B cell (primary cell): ENCODE measurements at regions of chr4 and their contacts with region 1.

Region 1: GRCh38 chr4:2008875-2009703 is at the start of gene NELFA:
- DNase-seq: peak; percentile 99
- ATAC-seq: peak; percentile 82
- H3K4me3 ChIP-seq: peak within 1 kb of the TSS; percentile 61 to 93 (median 85)
- H3K4me3 Mint-ChIP-seq: peak within 1 kb of the TSS; percentile 95
- H3K27ac ChIP-seq: peak within 1 kb of the TSS; percentile 97 to 99
- H3K27ac Mint-ChIP-seq: peak within 1 kb of the TSS; percentile 92
- H3K4me1 ChIP-seq: peaks cover 10 to 21% of the 10 kb centered on the region in 2 donors
- H3K4me1 Mint-ChIP-seq: peaks cover 32% of the 10 kb centered on the region
- H3K27me3 ChIP-seq: no peaks in the 10 kb centered on the region
- H3K27me3 Mint-ChIP-seq: peaks cover 1% of the 10 kb centered on the region
- CTCF ChIP-seq: no peak
- total RNA-seq, gene NELFA: 60.7 and 63.5 TPM in 2 replicates

Region 2: DNA sequence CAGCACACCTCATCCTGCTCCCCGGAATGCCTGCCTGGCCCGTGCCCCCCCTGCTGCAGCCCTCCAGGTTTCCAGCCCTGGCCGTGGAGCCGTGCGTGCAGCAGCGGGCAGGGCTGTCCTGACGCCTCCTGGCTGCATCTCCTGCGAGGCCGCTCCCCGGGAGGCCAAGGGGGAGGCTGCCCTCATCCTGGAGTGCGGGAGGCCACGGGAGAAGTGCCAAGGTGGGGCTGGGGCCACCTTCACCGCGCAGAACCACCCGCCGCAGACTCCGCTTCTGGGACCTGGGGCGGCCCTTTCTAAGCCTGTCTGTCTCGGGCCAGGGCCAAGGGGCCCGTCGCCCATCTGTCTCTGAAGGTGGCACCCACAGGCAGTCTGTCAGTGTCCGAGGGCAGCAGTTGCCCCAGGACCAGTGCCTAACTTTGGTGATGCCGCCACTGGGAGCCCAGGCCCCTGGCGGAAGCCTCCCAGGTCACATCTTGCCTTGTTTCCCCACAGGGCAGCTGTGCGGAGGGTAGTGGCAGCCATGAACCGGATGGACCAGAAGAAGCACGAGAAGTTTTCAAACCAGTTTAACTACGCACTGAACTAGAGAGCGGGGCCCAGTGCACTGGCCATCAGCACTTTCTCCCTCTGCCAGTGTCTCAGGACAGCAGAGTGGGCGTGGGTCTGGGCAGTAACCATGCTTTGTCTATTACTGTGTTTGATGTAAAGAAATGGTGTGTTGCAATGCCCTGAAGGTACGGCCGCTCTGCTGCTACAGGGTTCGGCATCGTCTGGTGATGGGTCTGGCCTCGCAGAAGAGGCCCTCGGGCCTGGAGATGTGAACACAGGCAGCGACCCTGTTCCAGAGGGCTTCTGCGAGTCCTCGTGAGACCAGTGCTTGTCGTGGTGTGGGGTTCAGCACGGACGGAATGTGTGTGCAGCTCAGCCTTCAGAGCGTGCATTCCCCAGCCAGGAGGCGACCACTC is 623.4 kb before region 1 on chr4:
- CTCF ChIA-PET with region 1: no interaction called
- POLR2A ChIA-PET with region 1: no interaction called
- intact Hi-C with region 1: no loop called
- DNase-seq: no peak
- ATAC-seq: no peak
- H3K4me3 ChIP-seq: no peak overlapping the region
- H3K4me3 Mint-ChIP-seq: no peak overlapping the region
- H3K27ac ChIP-seq: no peak overlapping the region
- H3K27ac Mint-ChIP-seq: no peak overlapping the region
- H3K4me1 ChIP-seq: no peaks in the 10 kb centered on the region
- H3K4me1 Mint-ChIP-seq: no peaks in the 10 kb centered on the region
- H3K27me3 ChIP-seq: no peaks in the 10 kb centered on the region
- H3K27me3 Mint-ChIP-seq: no peaks in the 10 kb centered on the region
- CTCF ChIP-seq: no peak

Region 3: GRCh38 chr4:1721004-1721665 is 288.0 kb before region 1 on chr4 and contains the starts of genes TACC3 and TMEM129:
- CTCF ChIA-PET with region 1: no interaction called
- POLR2A ChIA-PET with region 1: no interaction called
- intact Hi-C with region 1: loop called (anchors 2 kb)
- DNase-seq: peak; percentile 98
- ATAC-seq: peak; percentile 81
- H3K4me3 ChIP-seq: peak within 1 kb of the TSS; percentile 41 to 69 (median 60)
- H3K4me3 Mint-ChIP-seq: peak within 1 kb of the TSS; percentile 93
- H3K27ac ChIP-seq: peak within 1 kb of the TSS; percentile 89 to 96
- H3K27ac Mint-ChIP-seq: peak within 1 kb of the TSS; percentile 98
- H3K4me1 ChIP-seq: peaks cover 59 to 84% of the 10 kb centered on the region in 2 donors
- H3K4me1 Mint-ChIP-seq: peaks cover 65% of the 10 kb centered on the region
- H3K27me3 ChIP-seq: no peaks in the 10 kb centered on the region
- H3K27me3 Mint-ChIP-seq: no peaks in the 10 kb centered on the region
- CTCF ChIP-seq: no peak
- total RNA-seq, gene TACC3: 47.9 and 54.5 TPM in 2 replicates
- total RNA-seq, gene TMEM129: 41.0 and 41.9 TPM in 2 replicates

Region 4: GRCh38 chr4:1870578-1871443 is 138.3 kb before region 1 on chr4 and contains the start of gene NSD2:
- CTCF ChIA-PET with region 1: no interaction called
- POLR2A ChIA-PET with region 1: no interaction called
- intact Hi-C with region 1: loop called (anchors 5 kb)
- DNase-seq: peak; percentile 95
- ATAC-seq: peak; percentile 66
- H3K4me3 ChIP-seq: peak within 1 kb of the TSS; percentile 13 to 89 (median 79)
- H3K4me3 Mint-ChIP-seq: peak within 1 kb of the TSS; percentile 87
- H3K27ac ChIP-seq: peak within 1 kb of the TSS; percentile 87 to 95
- H3K27ac Mint-ChIP-seq: peak within 1 kb of the TSS; percentile 93
- H3K4me1 ChIP-seq: peaks cover 12 to 26% of the 10 kb centered on the region in 2 donors
- H3K4me1 Mint-ChIP-seq: peaks cover 26% of the 10 kb centered on the region
- H3K27me3 ChIP-seq: peaks cover 0 to 4% (median 2%) of the 10 kb centered on the region in 4 experiments
- H3K27me3 Mint-ChIP-seq: no peaks in the 10 kb centered on the region
- CTCF ChIP-seq: no peak
- total RNA-seq, gene NSD2: 64.8 and 71.9 TPM in 2 replicates

Region 5: DNA sequence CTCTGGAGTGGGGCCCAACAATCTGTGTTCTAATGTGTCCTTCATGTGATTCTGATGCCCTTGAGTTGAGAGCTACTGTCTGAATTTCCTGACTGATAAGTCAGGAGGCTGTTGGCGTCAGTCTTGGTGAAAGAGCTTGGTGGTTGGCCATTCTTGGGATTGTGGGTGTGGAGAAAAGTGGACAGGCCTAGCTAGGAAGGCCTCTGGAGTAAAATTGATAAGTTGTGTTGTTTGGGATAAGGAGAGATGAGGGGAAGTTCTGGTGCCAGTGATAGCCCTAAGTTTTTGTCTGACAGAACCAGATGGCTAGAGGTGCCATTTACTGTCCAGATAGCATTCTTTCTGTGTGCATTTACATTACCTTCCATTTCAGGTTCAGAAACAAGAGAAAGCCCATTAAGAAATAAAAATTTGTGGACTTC is 126.2 kb before region 1 on chr4:
- CTCF ChIA-PET with region 1: no interaction called
- POLR2A ChIA-PET with region 1: no interaction called
- intact Hi-C with region 1: no loop called
- DNase-seq: no peak
- ATAC-seq: no peak
- H3K4me3 ChIP-seq: no peak overlapping the region
- H3K4me3 Mint-ChIP-seq: no peak overlapping the region
- H3K27ac ChIP-seq: no peak overlapping the region
- H3K27ac Mint-ChIP-seq: no peak overlapping the region
- H3K4me1 ChIP-seq: peaks cover 0 to 5% of the 10 kb centered on the region in 2 donors
- H3K4me1 Mint-ChIP-seq: peaks cover 28% of the 10 kb centered on the region
- H3K27me3 ChIP-seq: no peaks in the 10 kb centered on the region
- H3K27me3 Mint-ChIP-seq: no peaks in the 10 kb centered on the region
- CTCF ChIP-seq: no peak

Region 6: DNA sequence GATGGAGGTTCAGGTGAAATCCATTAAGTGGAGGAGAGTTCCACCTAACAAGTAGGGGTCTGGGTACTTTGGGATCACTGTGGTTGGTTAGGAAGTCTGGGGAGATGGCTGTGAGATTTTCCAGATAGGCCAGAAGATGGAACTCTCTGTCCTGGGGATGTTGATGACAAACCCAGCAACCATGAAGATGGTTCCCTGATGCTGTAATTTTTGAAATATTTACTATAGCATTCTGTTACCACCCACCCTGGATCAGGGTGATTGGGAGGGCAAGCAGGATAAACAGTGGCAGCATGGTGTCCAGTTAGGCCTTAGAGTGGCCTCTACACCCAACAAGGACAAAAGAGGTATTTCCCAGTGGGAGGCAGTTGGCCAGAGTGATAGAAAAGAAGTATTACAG is 15.6 kb after region 1 on chr4:
- CTCF ChIA-PET with region 1: no interaction called
- POLR2A ChIA-PET with region 1: no interaction called
- intact Hi-C with region 1: no loop called
- DNase-seq: no peak
- ATAC-seq: no peak
- H3K4me3 ChIP-seq: no peak overlapping the region
- H3K4me3 Mint-ChIP-seq: no peak overlapping the region
- H3K27ac ChIP-seq: no peak overlapping the region
- H3K27ac Mint-ChIP-seq: no peak overlapping the region
- H3K4me1 ChIP-seq: no peaks in the 10 kb centered on the region
- H3K4me1 Mint-ChIP-seq: no peaks in the 10 kb centered on the region
- H3K27me3 ChIP-seq: peaks cover 0 to 21% (median 8%) of the 10 kb centered on the region in 4 experiments
- H3K27me3 Mint-ChIP-seq: peaks cover 65% of the 10 kb centered on the region
- CTCF ChIP-seq: no peak

Region 7: DNA sequence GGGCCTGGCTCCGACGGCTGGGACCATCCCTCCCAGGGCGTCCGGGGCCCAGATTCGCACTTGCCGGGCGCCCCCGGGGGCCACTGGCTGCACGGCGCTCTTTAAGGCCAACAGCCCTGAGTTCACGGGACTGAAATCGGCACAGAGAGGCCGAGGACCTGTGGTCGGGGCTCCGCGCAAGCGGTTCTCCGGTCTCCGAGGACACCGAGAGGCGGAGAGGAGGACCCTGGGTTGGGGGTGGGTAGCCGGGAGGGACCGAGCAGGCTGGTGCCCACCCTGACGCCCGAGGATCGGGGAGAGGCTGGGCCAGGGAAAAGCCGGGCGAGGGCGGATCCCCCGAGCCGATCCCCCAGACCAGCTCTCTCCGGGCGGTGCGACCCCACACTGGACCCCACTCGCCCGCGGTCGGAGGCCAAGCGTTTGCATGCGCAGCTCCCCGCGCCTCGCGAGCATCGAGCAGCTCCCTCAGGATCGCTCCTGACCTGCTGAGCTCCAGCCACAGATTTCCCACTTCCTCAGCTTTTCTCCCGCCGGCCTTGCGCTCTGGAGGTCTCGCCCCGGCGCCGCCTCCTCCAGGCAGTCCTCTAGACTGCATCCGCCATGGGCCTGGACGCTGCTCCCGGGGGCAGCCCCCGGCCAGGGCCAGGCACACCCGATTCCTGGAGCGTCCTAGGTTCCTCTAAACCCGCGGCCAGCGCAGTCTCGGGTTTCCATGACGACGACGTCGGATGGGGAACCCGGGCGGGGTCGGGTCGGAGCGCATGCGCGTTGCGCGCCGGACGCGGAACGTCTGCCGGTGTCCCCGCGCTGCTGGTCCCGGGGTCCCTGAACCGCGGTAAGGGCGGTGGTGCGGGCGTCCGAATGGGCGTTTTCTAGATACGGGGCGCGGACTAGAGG is 32.4 kb after region 1 on chr4:
- CTCF ChIA-PET with region 1: no interaction called
- POLR2A ChIA-PET with region 1: no interaction called
- intact Hi-C with region 1: loop called (anchors 1 kb)
- DNase-seq: peak; percentile 87
- ATAC-seq: peak; percentile 73
- H3K4me3 ChIP-seq: peak overlapping the region; percentile 57 to 76 (median 69)
- H3K4me3 Mint-ChIP-seq: peak overlapping the region; percentile 87
- H3K27ac ChIP-seq: no peak overlapping the region
- H3K27ac Mint-ChIP-seq: peak overlapping the region; percentile 65
- H3K4me1 ChIP-seq: peaks cover 9 to 18% of the 10 kb centered on the region in 2 donors
- H3K4me1 Mint-ChIP-seq: peaks cover 6% of the 10 kb centered on the region
- H3K27me3 ChIP-seq: peaks cover 0 to 22% (median 4%) of the 10 kb centered on the region in 4 experiments
- H3K27me3 Mint-ChIP-seq: peaks cover 24% of the 10 kb centered on the region
- CTCF ChIP-seq: no peak

Region 8: GRCh38 chr4:2402029-2402428 is 392.9 kb after region 1 on chr4:
- CTCF ChIA-PET with region 1: no interaction called
- POLR2A ChIA-PET with region 1: no interaction called
- intact Hi-C with region 1: no loop called
- DNase-seq: no peak
- ATAC-seq: peak; percentile 49
- H3K4me3 ChIP-seq: peak overlapping the region in 2 of 5 experiments; percentile 7 to 24
- H3K4me3 Mint-ChIP-seq: peak overlapping the region; percentile 67
- H3K27ac ChIP-seq: no peak overlapping the region
- H3K27ac Mint-ChIP-seq: no peak overlapping the region
- H3K4me1 ChIP-seq: peaks cover 7 to 11% of the 10 kb centered on the region in 2 donors
- H3K4me1 Mint-ChIP-seq: peaks cover 13% of the 10 kb centered on the region
- H3K27me3 ChIP-seq: peaks cover 0 to 34% (median 9%) of the 10 kb centered on the region in 4 experiments
- H3K27me3 Mint-ChIP-seq: peaks cover 32% of the 10 kb centered on the region
- CTCF ChIP-seq: no peak